ENCODE measurements at regions of chr1 and their contacts with region 1.

Region 1: GRCh38 chr1:10387413-10388079 is 11.3 kb upstream of the PGD start:
- DNase-seq: no peak
- ATAC-seq: peak; percentile 42
- H3K4me3 Mint-ChIP-seq: no peak overlapping the region
- H3K27ac Mint-ChIP-seq: no peak overlapping the region
- H3K4me1 Mint-ChIP-seq: peaks cover 12% of the 10 kb centered on the region
- H3K27me3 Mint-ChIP-seq: no peaks in the 10 kb centered on the region
- CTCF ChIP-seq: no peak

Region 2: GRCh38 chr1:8941906-8942305 is 1445.6 kb before region 1 on chr1:
- CTCF ChIA-PET with region 1: no interaction called
- POLR2A ChIA-PET with region 1: no interaction called
- intact Hi-C with region 1: no loop called
- DNase-seq: no peak
- ATAC-seq: no peak
- H3K4me3 Mint-ChIP-seq: no peak overlapping the region
- H3K27ac Mint-ChIP-seq: no peak overlapping the region
- H3K4me1 Mint-ChIP-seq: no peaks in the 10 kb centered on the region
- H3K27me3 Mint-ChIP-seq: peaks cover 21% of the 10 kb centered on the region
- CTCF ChIP-seq: no peak

Region 3: DNA sequence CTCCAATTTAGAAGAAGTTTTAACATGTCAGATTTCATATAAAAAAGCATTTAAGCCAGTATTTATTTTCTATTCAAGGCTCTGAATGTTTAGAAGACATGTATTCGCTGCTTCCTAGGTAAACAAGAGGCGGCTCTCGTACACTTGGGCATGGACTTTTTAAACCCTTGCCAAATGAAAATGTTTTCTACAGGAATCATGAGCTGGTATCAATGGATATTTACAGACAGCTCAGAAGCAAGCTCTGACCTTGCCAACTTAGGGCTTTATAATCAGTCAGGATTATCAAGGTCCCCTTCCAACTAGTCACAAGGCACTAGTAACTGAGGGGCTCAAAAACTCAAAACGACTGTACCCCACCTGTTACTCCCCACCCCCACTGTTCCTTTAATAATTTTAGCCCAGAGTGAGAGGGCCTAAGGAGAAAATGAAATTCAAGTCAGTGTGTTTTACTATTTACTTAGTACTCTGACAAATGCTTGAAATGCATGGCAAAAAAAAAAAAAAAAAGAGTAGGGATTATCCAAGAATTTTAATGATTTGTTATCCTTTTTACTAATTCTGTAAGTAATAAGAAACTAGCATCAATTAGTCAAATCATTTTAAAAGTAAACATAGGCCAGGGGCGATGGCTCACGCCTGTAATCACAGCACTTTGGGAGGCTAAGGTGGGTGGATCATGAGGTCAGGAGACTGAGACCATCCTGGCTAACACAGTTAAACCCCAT is 576.1 kb before region 1 on chr1:
- CTCF ChIA-PET with region 1: no interaction called
- POLR2A ChIA-PET with region 1: interaction called, 12 read pairs
- intact Hi-C with region 1: no loop called
- DNase-seq: no peak
- ATAC-seq: no peak
- H3K4me3 Mint-ChIP-seq: no peak overlapping the region
- H3K27ac Mint-ChIP-seq: no peak overlapping the region
- H3K4me1 Mint-ChIP-seq: peaks cover 26% of the 10 kb centered on the region
- H3K27me3 Mint-ChIP-seq: no peaks in the 10 kb centered on the region
- CTCF ChIP-seq: no peak

Region 4: GRCh38 chr1:10555614-10556429 is 168.3 kb after region 1 on chr1:
- CTCF ChIA-PET with region 1: no interaction called
- POLR2A ChIA-PET with region 1: no interaction called
- intact Hi-C with region 1: no loop called
- DNase-seq: no peak
- ATAC-seq: peak; percentile 47
- H3K4me3 Mint-ChIP-seq: no peak overlapping the region
- H3K27ac Mint-ChIP-seq: peak overlapping the region; percentile 14
- H3K4me1 Mint-ChIP-seq: peaks cover 22% of the 10 kb centered on the region
- H3K27me3 Mint-ChIP-seq: no peaks in the 10 kb centered on the region
- CTCF ChIP-seq: no peak